Naive thymus-derived CD4-positive, alpha-beta T cell (primary cell): ENCODE measurements at regions of chr12 and their contacts with region 1.

Region 1: DNA sequence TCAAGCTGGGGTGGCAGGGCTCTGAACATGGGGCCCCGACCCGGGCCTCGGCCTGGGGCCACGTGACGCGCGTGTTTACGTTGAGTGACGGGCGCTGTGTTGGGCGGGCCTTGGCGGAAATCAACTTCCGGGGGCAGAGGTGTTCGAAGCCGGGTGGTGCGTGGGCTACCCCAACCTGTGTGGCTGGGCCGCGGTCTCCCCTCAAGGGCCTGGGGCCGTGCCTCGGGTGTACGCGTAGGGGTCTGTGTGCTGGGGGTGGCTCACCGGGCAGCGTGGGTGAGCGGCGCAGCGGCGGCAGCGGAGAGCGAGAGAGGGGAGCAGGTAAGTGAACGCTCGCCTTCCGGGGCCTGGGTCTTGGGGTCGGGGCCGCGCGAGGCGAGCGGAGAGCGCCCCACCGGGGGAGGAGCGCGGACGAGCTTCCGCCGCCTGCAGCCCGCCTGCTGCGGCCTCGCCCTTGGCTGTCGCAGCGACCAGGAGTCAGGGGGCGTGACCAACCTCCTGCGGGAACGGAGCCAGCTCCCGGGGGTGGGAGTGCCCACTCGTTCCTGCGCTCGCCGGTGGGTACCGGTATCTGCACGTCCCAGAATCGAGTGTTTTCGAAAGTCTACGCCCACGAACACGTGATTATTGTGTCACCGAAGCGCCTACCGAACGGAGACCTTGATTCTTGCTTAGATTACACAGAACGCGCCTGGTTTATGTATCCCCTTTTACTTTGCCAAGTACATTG is at the start of gene CCDC91:
- DNase-seq: peak; percentile 83 to 95 (median 90)
- ATAC-seq: peak; percentile 90
- H3K4me3 ChIP-seq: peak within 1 kb of the TSS; percentile 80
- H3K4me3 Mint-ChIP-seq: peak within 1 kb of the TSS; percentile 88 to 98 (median 96)
- H3K27ac ChIP-seq: peak within 1 kb of the TSS; percentile 98
- H3K27ac Mint-ChIP-seq: peak within 1 kb of the TSS; percentile 98 to 100 (median 99)
- H3K4me1 ChIP-seq: peaks cover 19 to 25% of the 10 kb centered on the region in 2 donors
- H3K4me1 Mint-ChIP-seq: peaks cover 27 to 79% (median 68%) of the 10 kb centered on the region in 7 donors
- H3K27me3 ChIP-seq: no peaks in the 10 kb centered on the region
- H3K27me3 Mint-ChIP-seq: no peaks in the 10 kb centered on the region
- total RNA-seq, gene CCDC91: 20.2 to 105 (median 70.4) TPM

Region 2: GRCh38 chr12:27243804-27244683 is 946.4 kb before region 1 on chr12 and contains the start of gene STK38L:
- CTCF ChIA-PET with region 1: no interaction called
- POLR2A ChIA-PET with region 1: no interaction called
- intact Hi-C with region 1: loop called in 1 of 2 experiments (anchors 5 kb)
- DNase-seq: peak; percentile 94 to 98 (median 96)
- ATAC-seq: peak; percentile 98
- H3K4me3 ChIP-seq: peak within 1 kb of the TSS; percentile 84
- H3K4me3 Mint-ChIP-seq: peak within 1 kb of the TSS; percentile 97 to 100 (median 99)
- H3K27ac ChIP-seq: peak within 1 kb of the TSS; percentile 82
- H3K27ac Mint-ChIP-seq: peak within 1 kb of the TSS; percentile 92 to 99 (median 97)
- H3K4me1 ChIP-seq: peaks cover 12 to 13% of the 10 kb centered on the region in 2 donors
- H3K4me1 Mint-ChIP-seq: peaks cover 17 to 62% (median 51%) of the 10 kb centered on the region in 7 donors
- H3K27me3 ChIP-seq: no peaks in the 10 kb centered on the region
- H3K27me3 Mint-ChIP-seq: no peaks in the 10 kb centered on the region
- total RNA-seq, gene STK38L: 16.2 to 22.8 (median 21.2) TPM

Region 3: DNA sequence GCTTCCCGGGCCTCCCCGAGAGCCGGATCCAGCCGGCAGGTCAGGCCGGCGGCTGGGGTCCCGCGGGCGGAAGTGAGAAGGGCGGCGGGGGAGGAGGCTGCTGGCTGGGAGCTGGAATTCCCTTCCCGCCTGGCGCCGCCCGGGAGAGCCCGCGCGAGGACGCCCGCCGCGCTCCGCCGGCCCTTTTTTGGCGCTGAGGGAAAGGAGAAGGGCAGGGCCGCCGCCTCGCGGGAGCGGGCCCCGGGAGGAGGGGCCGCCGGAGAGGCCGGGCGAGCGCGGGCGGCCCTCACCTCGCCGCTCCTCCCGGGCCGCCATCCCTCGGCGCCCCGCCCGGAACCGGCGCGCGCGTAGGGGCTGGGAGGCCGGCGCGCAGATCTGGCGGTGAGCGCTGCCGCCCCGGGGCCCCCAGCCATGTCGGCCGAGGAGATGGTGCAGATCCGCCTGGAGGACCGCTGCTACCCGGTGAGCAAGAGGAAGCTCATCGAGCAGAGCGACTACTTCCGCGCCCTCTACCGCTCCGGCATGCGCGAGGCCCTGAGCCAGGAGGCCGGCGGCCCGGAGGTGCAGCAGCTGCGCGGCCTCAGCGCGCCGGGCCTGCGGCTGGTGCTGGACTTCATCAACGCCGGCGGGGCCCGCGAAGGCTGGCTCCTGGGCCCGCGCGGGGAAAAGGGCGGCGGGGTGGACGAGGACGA is 410.4 kb before region 1 on chr12 and contains the starts of genes KLHL42 and MANSC4:
- CTCF ChIA-PET with region 1: no interaction called
- POLR2A ChIA-PET with region 1: no interaction called
- intact Hi-C with region 1: loop called in 1 of 2 experiments (anchors 2 kb)
- DNase-seq: peak; percentile 52 to 73 (median 70)
- ATAC-seq: peak; percentile 90
- H3K4me3 ChIP-seq: peak within 1 kb of the TSS; percentile 81
- H3K4me3 Mint-ChIP-seq: peak within 1 kb of the TSS; percentile 84 to 94 (median 91)
- H3K27ac ChIP-seq: peak within 1 kb of the TSS; percentile 76
- H3K27ac Mint-ChIP-seq: peak within 1 kb of the TSS; percentile 74 to 94 (median 88)
- H3K4me1 ChIP-seq: peaks cover 5 to 12% of the 10 kb centered on the region in 2 donors
- H3K4me1 Mint-ChIP-seq: peaks cover 18 to 43% (median 38%) of the 10 kb centered on the region in 7 donors
- H3K27me3 ChIP-seq: no peaks in the 10 kb centered on the region
- H3K27me3 Mint-ChIP-seq: peaks cover 0 to 18% (median 0%) of the 10 kb centered on the region in 5 donors
- total RNA-seq, gene KLHL42: 16.0 to 27.0 (median 18.4) TPM
- total RNA-seq, gene MANSC4: 0.64 TPM in 1 of 5 experiments, not detected in the others

Region 4: DNA sequence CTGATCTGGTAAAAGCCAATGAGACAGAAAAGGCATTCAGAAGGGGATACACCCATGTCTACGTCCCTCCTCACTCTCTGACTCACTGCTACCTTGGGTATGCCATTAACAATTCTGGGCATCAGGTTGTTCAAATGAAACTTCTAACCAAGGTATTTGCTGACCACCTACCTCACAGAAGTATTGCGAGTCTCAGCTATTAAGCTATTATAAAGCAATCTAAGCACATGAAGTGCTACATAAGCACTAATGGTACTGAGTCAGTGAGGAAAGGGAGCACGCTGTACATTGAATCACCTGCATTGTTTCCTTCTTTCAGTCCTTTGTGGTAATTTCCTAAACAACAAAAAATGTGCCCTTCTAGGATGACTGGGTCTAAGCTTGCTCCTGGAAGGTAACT is 63.0 kb before region 1 on chr12:
- CTCF ChIA-PET with region 1: no interaction called
- POLR2A ChIA-PET with region 1: no interaction called
- intact Hi-C with region 1: no loop called
- DNase-seq: no peak
- ATAC-seq: no peak
- H3K4me3 ChIP-seq: no peak overlapping the region
- H3K4me3 Mint-ChIP-seq: no peak overlapping the region
- H3K27ac ChIP-seq: no peak overlapping the region
- H3K27ac Mint-ChIP-seq: no peak overlapping the region
- H3K4me1 ChIP-seq: no peaks in the 10 kb centered on the region
- H3K4me1 Mint-ChIP-seq: no peaks in the 10 kb centered on the region
- H3K27me3 ChIP-seq: no peaks in the 10 kb centered on the region
- H3K27me3 Mint-ChIP-seq: peaks cover 0 to 7% (median 0%) of the 10 kb centered on the region in 5 donors

Region 5: DNA sequence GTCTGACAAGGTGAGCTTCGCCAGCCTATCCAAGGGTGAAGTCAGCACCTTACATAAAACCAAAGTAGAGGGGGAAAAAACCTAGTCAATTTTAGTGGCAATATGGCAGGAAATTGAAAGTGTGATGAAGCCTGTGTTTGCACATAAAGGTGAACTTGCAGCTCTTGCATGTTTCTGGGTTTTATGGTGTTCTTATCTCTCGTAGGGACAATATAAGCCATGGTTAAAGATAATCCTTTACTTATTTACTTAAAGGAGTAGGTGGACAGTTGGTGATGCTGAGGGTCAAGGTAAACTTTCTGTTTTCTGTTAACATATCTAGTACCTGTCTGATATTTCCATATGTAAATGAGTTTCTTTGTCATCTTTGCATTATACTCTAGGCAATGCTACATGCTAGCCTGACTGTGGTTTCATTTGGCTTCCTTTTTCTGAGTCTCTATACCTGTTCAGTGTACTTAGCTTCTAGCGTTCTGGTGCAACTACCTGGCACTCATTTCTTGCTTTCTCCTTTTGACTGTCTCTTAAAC is 32.6 kb after region 1 on chr12:
- CTCF ChIA-PET with region 1: no interaction called
- POLR2A ChIA-PET with region 1: interaction called, 18 read pairs
- intact Hi-C with region 1: loop called (anchors 1 to 2 kb)
- DNase-seq: peak in 6 of 9 donors; percentile 10 to 44 (median 25)
- ATAC-seq: peak; percentile 79
- H3K4me3 ChIP-seq: peak overlapping the region; percentile 3
- H3K4me3 Mint-ChIP-seq: peak overlapping the region; percentile 31 to 85 (median 74)
- H3K27ac ChIP-seq: no peak overlapping the region
- H3K27ac Mint-ChIP-seq: peak overlapping the region; percentile 19 to 84 (median 46)
- H3K4me1 ChIP-seq: peaks cover 34 to 37% of the 10 kb centered on the region in 2 donors
- H3K4me1 Mint-ChIP-seq: peaks cover 34 to 70% (median 63%) of the 10 kb centered on the region in 7 donors
- H3K27me3 ChIP-seq: no peaks in the 10 kb centered on the region
- H3K27me3 Mint-ChIP-seq: peaks cover 0 to 10% (median 0%) of the 10 kb centered on the region in 5 donors

Region 6: DNA sequence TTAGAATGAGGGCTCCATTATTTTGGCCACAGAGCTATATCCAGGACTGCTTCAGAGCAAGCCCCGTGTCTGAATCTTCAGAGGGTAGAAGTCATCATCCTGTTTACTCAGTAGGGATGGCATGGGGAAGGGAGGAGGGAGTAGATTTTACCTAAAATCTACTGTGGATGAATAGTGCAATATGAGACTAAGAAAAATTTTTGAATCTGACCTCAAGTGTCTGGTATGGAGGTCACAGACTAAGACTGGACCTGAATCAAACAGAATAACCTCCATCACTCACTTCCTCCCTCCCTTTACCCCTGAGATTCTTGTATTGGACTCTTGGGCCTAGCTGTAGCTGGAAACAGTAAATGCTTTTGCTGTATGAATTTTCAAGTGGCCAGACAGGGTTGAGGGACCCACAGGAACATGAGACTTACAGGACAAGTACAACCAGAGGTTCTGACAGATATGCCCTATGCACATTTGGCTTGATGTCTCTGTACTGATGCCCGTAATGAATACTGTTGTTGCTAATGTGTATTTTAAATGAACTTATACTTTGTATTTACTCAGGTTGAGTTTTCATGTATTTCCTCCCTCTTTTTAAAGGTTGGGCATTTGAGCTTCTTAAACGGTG is 78.2 kb after region 1 on chr12:
- CTCF ChIA-PET with region 1: no interaction called
- POLR2A ChIA-PET with region 1: interaction called, 5 read pairs
- intact Hi-C with region 1: loop called in 1 of 2 experiments (anchors 2 kb)
- DNase-seq: no peak
- ATAC-seq: no peak
- H3K4me3 ChIP-seq: no peak overlapping the region
- H3K4me3 Mint-ChIP-seq: no peak overlapping the region
- H3K27ac ChIP-seq: no peak overlapping the region
- H3K27ac Mint-ChIP-seq: no peak overlapping the region
- H3K4me1 ChIP-seq: no peaks in the 10 kb centered on the region
- H3K4me1 Mint-ChIP-seq: peaks cover 0 to 4% (median 0%) of the 10 kb centered on the region in 7 donors
- H3K27me3 ChIP-seq: no peaks in the 10 kb centered on the region
- H3K27me3 Mint-ChIP-seq: no peaks in the 10 kb centered on the region

Region 7: GRCh38 chr12:29380536-29381523 is 1190.3 kb after region 1 on chr12 and contains the start of gene ERGIC2:
- CTCF ChIA-PET with region 1: no interaction called
- POLR2A ChIA-PET with region 1: interaction called, 8 read pairs
- intact Hi-C with region 1: loop called in 1 of 2 experiments (anchors 2 kb)
- DNase-seq: peak; percentile 63 to 97 (median 95)
- ATAC-seq: peak; percentile 97
- H3K4me3 ChIP-seq: peak within 1 kb of the TSS; percentile 98
- H3K4me3 Mint-ChIP-seq: peak within 1 kb of the TSS; percentile 88 to 97 (median 94)
- H3K27ac ChIP-seq: peak within 1 kb of the TSS; percentile 91
- H3K27ac Mint-ChIP-seq: peak within 1 kb of the TSS; percentile 92 to 98 (median 96)
- H3K4me1 ChIP-seq: peaks cover 9 to 12% of the 10 kb centered on the region in 2 donors
- H3K4me1 Mint-ChIP-seq: peaks cover 20 to 63% (median 46%) of the 10 kb centered on the region in 7 donors
- H3K27me3 ChIP-seq: no peaks in the 10 kb centered on the region
- H3K27me3 Mint-ChIP-seq: no peaks in the 10 kb centered on the region
- total RNA-seq, gene ERGIC2: 36.0 to 85.7 (median 78.6) TPM